WTC11 (cell line): ENCODE measurements at regions of chr19 and their contacts with region 1.

Region 1: GRCh38 chr19:17424743-17425365 is 5.0 kb downstream of the MVB12A start:
- DNase-seq: peak; percentile 92
- ATAC-seq: peak; percentile 93
- H3K4me3 Mint-ChIP-seq: peak overlapping the region; percentile 67
- H3K27ac Mint-ChIP-seq: no peak overlapping the region
- H3K4me1 Mint-ChIP-seq: peaks cover 17% of the 10 kb centered on the region
- H3K27me3 Mint-ChIP-seq: no peaks in the 10 kb centered on the region
- CTCF ChIP-seq: peak; percentile 51

Region 2: DNA sequence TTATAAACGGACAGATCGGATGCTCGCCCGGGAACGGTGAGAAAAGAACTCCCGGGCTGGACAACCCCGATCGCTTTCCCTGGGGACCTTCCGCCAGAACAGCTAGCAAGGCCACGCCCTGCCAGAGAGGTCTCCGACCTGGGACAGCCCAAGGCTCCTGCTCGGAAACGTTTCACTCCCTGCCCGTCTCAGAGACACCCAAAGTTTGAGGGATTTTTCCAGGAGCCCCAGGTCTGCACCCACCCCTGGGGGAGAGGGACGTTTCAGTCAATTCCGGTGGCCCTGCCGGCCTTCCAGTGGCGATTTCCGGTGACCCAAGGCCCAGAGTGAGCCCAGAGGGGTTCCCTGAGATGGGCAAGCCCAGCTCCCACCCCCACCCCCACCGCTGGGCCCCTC is 180.9 kb before region 1 on chr19:
- CTCF ChIA-PET with region 1: no interaction called
- POLR2A ChIA-PET with region 1: no interaction called
- DNase-seq: peak; percentile 58
- ATAC-seq: peak; percentile 4
- H3K4me3 Mint-ChIP-seq: peak overlapping the region; percentile 97
- H3K27ac Mint-ChIP-seq: peak overlapping the region; percentile 57; the same call in 1 of the 2 replicates
- H3K4me1 Mint-ChIP-seq: peaks cover 49% of the 10 kb centered on the region
- H3K27me3 Mint-ChIP-seq: no peaks in the 10 kb centered on the region
- CTCF ChIP-seq: no peak

Region 3: DNA sequence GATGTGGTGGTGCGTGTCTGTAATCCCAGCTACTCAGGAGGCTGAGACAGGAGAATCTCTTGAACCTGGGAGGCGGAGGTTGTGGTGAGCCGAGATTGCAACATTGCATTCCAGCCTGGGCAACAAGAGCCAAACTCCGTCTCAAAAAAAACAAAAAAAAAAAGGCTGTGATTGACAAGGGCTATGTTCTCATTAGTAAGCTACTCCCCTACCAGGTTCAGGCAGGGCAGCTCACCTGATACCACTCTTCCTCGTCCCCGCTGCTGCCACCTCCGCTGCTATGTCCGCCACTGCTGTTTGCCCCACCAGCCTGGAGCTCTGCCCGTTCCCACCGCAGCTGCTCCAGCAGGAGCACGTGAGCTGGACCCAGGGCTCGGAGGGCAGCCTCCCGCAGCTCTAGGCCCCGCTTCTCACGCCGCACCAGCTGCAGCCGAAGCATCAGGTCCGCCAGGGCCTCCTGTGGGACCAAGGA is 169.7 kb before region 1 on chr19:
- CTCF ChIA-PET with region 1: no interaction called
- POLR2A ChIA-PET with region 1: no interaction called
- DNase-seq: no peak
- ATAC-seq: peak; percentile 63
- H3K4me3 Mint-ChIP-seq: no peak overlapping the region
- H3K27ac Mint-ChIP-seq: no peak overlapping the region
- H3K4me1 Mint-ChIP-seq: no peaks in the 10 kb centered on the region
- H3K27me3 Mint-ChIP-seq: no peaks in the 10 kb centered on the region
- CTCF ChIP-seq: no peak

Region 4: GRCh38 chr19:17405250-17406038 is 19.4 kb before region 1 on chr19 and contains the start of gene BST2:
- CTCF ChIA-PET with region 1: interaction called, 23 read pairs
- POLR2A ChIA-PET with region 1: interaction called, 27 read pairs
- DNase-seq: no peak
- ATAC-seq: peak; percentile 44
- H3K4me3 Mint-ChIP-seq: peak within 1 kb of the TSS; percentile 74
- H3K27ac Mint-ChIP-seq: peak within 1 kb of the TSS; percentile 87
- H3K4me1 Mint-ChIP-seq: peaks cover 32% of the 10 kb centered on the region
- H3K27me3 Mint-ChIP-seq: no peaks in the 10 kb centered on the region
- CTCF ChIP-seq: no peak
- total RNA-seq, gene BST2: 22.8 to 67.7 TPM (median 61.1 TPM) in 3 replicates

Region 5: DNA sequence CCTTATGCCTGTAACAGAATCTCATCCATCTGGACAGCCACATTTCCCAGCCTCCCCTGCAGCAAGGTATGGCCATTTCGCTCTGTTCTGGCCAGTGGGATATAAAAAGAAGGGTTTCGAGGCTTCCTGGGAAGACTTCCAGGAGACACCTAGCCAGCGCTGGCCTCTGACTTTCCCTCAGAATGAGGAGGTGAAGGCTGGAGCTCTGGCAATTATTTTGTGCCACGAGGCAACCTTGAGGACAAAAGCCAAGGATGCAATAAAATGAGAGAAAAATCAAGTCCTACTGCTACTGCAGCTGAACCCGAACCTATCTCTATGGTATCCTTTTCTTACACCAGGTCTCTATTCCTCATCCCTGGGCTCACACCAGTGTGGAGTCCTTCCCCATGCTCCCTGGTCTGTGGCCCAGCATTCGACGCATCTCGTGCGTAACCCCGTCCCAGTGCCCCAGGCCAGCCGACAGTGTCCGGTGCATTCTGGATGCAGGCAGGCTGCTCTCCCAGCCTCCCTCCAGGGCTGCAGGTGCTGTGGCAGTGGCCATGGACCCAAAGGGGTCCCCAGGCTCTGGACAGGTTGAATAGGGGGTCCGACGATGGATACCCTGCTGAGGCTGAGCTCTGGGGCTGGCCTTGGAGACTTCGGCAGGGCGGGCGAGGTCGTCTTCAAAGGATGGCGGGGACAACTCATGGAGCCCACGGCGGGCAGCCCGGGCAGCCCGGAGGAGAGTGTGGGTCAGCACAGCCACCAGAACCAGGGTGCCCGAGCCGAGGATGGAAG is 11.4 kb after region 1 on chr19:
- CTCF ChIA-PET with region 1: interaction called, 18 read pairs
- POLR2A ChIA-PET with region 1: interaction called, 3 read pairs
- DNase-seq: no peak
- ATAC-seq: no peak
- H3K4me3 Mint-ChIP-seq: no peak overlapping the region
- H3K27ac Mint-ChIP-seq: no peak overlapping the region
- H3K4me1 Mint-ChIP-seq: no peaks in the 10 kb centered on the region
- H3K27me3 Mint-ChIP-seq: peaks cover 4% of the 10 kb centered on the region
- CTCF ChIP-seq: no peak

Region 6: GRCh38 chr19:17441241-17442021 is 16.6 kb after region 1 on chr19:
- CTCF ChIA-PET with region 1: interaction called, 18 read pairs
- POLR2A ChIA-PET with region 1: interaction called, 3 read pairs
- DNase-seq: peak; percentile 41
- ATAC-seq: peak; percentile 88
- H3K4me3 Mint-ChIP-seq: no peak overlapping the region
- H3K27ac Mint-ChIP-seq: no peak overlapping the region
- H3K4me1 Mint-ChIP-seq: no peaks in the 10 kb centered on the region
- H3K27me3 Mint-ChIP-seq: peaks cover 8% of the 10 kb centered on the region
- CTCF ChIP-seq: no peak; the same call in 1 of the 2 replicates

Region 7: GRCh38 chr19:17448131-17448967 is 23.5 kb after region 1 on chr19 and contains the start of gene TMEM221:
- CTCF ChIA-PET with region 1: interaction called, 14 read pairs
- POLR2A ChIA-PET with region 1: no interaction called
- DNase-seq: peak; percentile 78
- ATAC-seq: peak; percentile 75
- H3K4me3 Mint-ChIP-seq: peak within 1 kb of the TSS; percentile 70
- H3K27ac Mint-ChIP-seq: no peak within 1 kb of the TSS
- H3K4me1 Mint-ChIP-seq: peaks cover 3% of the 10 kb centered on the region
- H3K27me3 Mint-ChIP-seq: peaks cover 22% of the 10 kb centered on the region
- CTCF ChIP-seq: peak; percentile 40; the same call in 1 of the 2 replicates
- total RNA-seq, gene TMEM221: 1.2 to 2.9 TPM (median 2.3 TPM) in 3 replicates